Mammary epithelial cell (primary cell): ENCODE measurements at regions of chr11 and their contacts with region 1.

Region 1: GRCh38 chr11:26719998-26720397 is 1.9 kb downstream of the SLC5A12 start:
- DNase-seq: peak; percentile 19
- H3K4me3 ChIP-seq: no peak overlapping the region
- H3K27ac ChIP-seq: no peak overlapping the region
- H3K4me1 ChIP-seq: no peaks in the 10 kb centered on the region
- H3K27me3 ChIP-seq: peaks cover 4% of the 10 kb centered on the region
- CTCF ChIP-seq: no peak

Region 2: GRCh38 chr11:26551186-26551801 is 168.7 kb before region 1 on chr11:
- CTCF ChIA-PET with region 1: no interaction called
- dilution Hi-C with region 1: loop called (anchors 10 kb)
- in situ Hi-C with region 1: no loop called
- intact Hi-C with region 1: no loop called
- DNase-seq: peak; percentile 6
- H3K4me3 ChIP-seq: no peak overlapping the region
- H3K27ac ChIP-seq: no peak overlapping the region
- H3K4me1 ChIP-seq: no peaks in the 10 kb centered on the region
- H3K27me3 ChIP-seq: no peaks in the 10 kb centered on the region
- CTCF ChIP-seq: peak; percentile 33 to 55